Activated T-helper 2 cell treated with anti-CD3 and anti-CD28 coated beads, Interferon-gamma antibody, Interleukin-2, Interleukin-4, amounts not matched to agents 10 μg/mL and 5 μg/mL and 100 μg/mL, durations not matched to agents 14 hours and 24 hours and 36 hours (primary cell): ENCODE measurements at regions of chr7 and their contacts with region 1.

Region 1: GRCh38 chr7:130182990-130183389 is 22.2 kb downstream of the TMEM209 start:
- DNase-seq: no peak
- H3K4me3 Mint-ChIP-seq: no peak overlapping the region
- H3K27ac Mint-ChIP-seq: peak overlapping the region; percentile 55
- H3K4me1 Mint-ChIP-seq: peaks cover 22% of the 10 kb centered on the region
- H3K27me3 Mint-ChIP-seq: no peaks in the 10 kb centered on the region

Region 2: GRCh38 chr7:130205084-130205947 is 22.3 kb after region 1 on chr7 and contains the start of gene TMEM209:
- intact Hi-C with region 1: loop called (anchors 2 kb)
- DNase-seq: peak; percentile 95
- H3K4me3 Mint-ChIP-seq: peak within 1 kb of the TSS; percentile 99
- H3K27ac Mint-ChIP-seq: peak within 1 kb of the TSS; percentile 99
- H3K4me1 Mint-ChIP-seq: peaks cover 18% of the 10 kb centered on the region
- H3K27me3 Mint-ChIP-seq: no peaks in the 10 kb centered on the region
- total RNA-seq, gene TMEM209: 41.6 and 43.2 TPM in 2 replicates

Region 3: DNA sequence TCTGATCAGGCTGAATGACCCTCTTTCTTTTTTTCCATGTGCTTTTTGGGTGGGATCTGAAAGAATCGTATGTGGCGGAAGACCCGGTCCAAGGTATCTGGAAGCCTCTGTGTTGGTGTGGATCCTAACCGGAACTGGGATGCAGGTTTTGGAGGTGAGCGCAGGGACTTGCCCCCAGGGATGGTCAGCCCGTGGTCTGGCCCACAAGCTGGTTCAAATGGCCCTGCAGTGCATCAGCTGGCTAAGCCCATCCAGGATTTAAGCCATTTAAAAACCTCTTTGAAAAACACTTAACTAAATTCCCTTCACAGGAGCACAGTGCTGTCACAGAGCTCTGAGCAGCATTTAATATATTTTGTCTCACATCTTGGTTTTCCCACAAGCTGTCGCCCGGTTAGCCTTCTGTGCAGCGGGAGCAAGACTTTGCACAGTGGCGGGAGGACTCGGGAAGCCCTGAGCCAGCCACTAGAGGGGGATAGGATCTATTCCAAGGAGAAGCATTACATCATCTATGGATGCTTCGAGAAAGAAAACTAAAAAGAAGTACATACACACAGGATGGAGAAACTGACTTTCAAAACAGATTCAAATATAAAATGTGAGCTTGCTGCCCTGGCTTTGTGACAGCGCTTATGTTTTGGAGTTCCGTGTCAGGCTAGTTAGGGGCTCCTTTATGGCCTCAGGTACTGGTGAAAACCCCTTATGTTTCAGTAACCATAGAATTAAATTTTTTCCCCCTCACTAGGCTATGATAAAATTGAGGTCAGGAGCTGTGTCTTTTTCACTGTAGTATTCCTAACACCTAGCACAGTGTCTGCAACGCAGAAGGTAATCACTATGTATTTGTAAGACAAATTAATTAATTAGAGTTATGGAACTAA is 95.0 kb after region 1 on chr7:
- intact Hi-C with region 1: loop called (anchors 2 kb)
- DNase-seq: no peak
- H3K4me3 Mint-ChIP-seq: no peak overlapping the region
- H3K27ac Mint-ChIP-seq: peak overlapping the region; percentile 63
- H3K4me1 Mint-ChIP-seq: peaks cover 21% of the 10 kb centered on the region
- H3K27me3 Mint-ChIP-seq: peaks cover 3% of the 10 kb centered on the region

Region 4: GRCh38 chr7:130649004-130649790 is 466.2 kb after region 1 on chr7:
- intact Hi-C with region 1: loop called (anchors 1 kb)
- DNase-seq: no peak
- H3K4me3 Mint-ChIP-seq: peak overlapping the region; percentile 30
- H3K27ac Mint-ChIP-seq: peak overlapping the region; percentile 89
- H3K4me1 Mint-ChIP-seq: peaks cover 37% of the 10 kb centered on the region
- H3K27me3 Mint-ChIP-seq: no peaks in the 10 kb centered on the region